ENCODE measurements at regions of chr15 and their contacts with region 1.

Region 1: DNA sequence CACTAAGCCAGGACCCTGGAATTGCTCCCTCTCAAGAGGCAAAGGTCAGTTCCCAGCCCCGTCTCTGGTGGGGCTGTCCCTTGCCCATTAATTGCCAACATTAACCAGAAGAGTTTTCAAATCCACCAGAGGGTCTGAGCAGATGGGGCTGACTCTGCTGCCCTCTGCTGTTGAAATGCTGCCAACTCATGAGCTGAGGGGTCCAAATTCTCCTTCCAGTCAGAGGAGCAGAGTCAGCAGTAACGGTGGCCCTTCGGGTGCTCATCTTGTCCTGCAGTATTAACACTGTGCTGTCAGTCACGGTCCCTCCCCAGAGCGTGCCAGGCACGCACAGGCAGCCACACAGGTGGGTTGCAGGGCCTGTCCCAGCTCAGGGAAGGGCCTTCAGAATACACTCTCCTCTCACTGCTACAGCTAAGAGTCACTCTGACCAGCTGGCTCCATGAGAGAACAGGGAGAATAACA is 10.7 kb upstream of the SPTBN5 start:
- DNase-seq: peak in 1 of 2 donors; percentile 42
- ATAC-seq: peak; percentile 46 to 75
- H3K4me3 ChIP-seq: no peak overlapping the region
- H3K27ac ChIP-seq: peak overlapping the region in 2 of 4 donors; percentile 36 to 41
- H3K4me1 ChIP-seq: peaks cover 7 to 11% of the 10 kb centered on the region in 2 donors
- H3K27me3 ChIP-seq: no peaks in the 10 kb centered on the region
- CTCF ChIP-seq: peak; percentile 53 to 79 (median 66)
- POLR2A ChIP-seq: no peak

Region 2: GRCh38 chr15:41610048-41610447 is 294.5 kb before region 1 on chr15:
- in situ Hi-C with region 1: no loop called
- intact Hi-C with region 1: no loop called
- DNase-seq: no peak
- ATAC-seq: no peak
- H3K4me3 ChIP-seq: no peak overlapping the region
- H3K27ac ChIP-seq: no peak overlapping the region
- H3K4me1 ChIP-seq: no peaks in the 10 kb centered on the region
- H3K27me3 ChIP-seq: peaks cover 0 to 2% (median 0%) of the 10 kb centered on the region in 3 donors
- CTCF ChIP-seq: no peak
- POLR2A ChIP-seq: no peak

Region 3: GRCh38 chr15:41827880-41828806 is 76.4 kb before region 1 on chr15 and contains the start of gene JMJD7:
- in situ Hi-C with region 1: no loop called
- intact Hi-C with region 1: loop called (anchors 5 kb)
- DNase-seq: peak; percentile 88 to 91
- ATAC-seq: peak; percentile 89
- H3K4me3 ChIP-seq: peak within 1 kb of the TSS; percentile 63 to 90 (median 68)
- H3K27ac ChIP-seq: peak within 1 kb of the TSS; percentile 82 to 90 (median 87)
- H3K4me1 ChIP-seq: peaks cover 15 to 18% of the 10 kb centered on the region in 2 donors
- H3K27me3 ChIP-seq: no peaks in the 10 kb centered on the region
- CTCF ChIP-seq: no peak
- POLR2A ChIP-seq: peak; percentile 72 to 77
- total RNA-seq, gene JMJD7: 1.7 to 7.6 (median 3.9) TPM

Region 4: DNA sequence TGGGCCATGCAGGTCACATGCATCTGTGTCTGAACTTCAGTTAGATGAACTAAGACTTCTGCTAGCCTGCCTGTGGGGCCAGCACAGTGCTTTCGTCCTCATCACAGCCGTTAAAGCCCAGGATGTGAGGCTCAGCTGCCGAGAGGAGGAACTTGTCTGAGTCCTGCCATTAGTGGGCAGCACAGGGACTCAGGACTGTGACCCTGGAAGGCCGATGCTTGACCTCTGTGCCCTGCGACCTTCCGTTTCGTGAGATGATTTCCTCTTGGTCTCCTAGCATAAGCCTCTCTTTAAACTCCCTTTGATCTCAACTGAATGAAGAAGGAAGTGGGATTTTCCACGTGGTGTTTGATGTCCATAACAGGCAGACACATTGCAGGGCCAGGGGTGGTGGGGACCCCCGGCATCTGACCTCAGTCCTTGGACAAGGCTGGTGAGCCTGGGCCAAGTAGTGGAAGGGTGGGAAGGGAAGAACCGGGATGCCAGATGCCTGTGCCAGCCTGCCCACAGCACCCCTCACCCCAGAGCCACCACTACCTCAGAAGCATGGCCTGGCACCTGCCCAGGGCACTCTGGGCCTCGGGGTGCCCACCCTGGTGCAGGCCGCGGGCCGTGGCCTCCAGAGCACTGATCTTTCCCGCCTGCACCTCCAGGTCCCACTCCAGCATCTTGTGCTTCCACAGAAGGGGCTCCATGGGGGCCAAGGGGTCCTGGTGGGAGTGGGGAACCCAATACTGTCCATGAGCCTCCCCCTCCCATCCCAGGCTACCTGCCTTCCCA is 44.3 kb before region 1 on chr15:
- in situ Hi-C with region 1: no loop called
- intact Hi-C with region 1: no loop called
- DNase-seq: no peak
- ATAC-seq: no peak
- H3K4me3 ChIP-seq: no peak overlapping the region
- H3K27ac ChIP-seq: no peak overlapping the region
- H3K4me1 ChIP-seq: no peaks in the 10 kb centered on the region
- H3K27me3 ChIP-seq: peaks cover 0 to 6% (median 0%) of the 10 kb centered on the region in 3 donors
- CTCF ChIP-seq: no peak
- POLR2A ChIP-seq: no peak

Measured in gastrocnemius medialis (tissue), 4 donors.